ENCODE measurements at regions of chr14 and their contacts with region 1.

Region 1: DNA sequence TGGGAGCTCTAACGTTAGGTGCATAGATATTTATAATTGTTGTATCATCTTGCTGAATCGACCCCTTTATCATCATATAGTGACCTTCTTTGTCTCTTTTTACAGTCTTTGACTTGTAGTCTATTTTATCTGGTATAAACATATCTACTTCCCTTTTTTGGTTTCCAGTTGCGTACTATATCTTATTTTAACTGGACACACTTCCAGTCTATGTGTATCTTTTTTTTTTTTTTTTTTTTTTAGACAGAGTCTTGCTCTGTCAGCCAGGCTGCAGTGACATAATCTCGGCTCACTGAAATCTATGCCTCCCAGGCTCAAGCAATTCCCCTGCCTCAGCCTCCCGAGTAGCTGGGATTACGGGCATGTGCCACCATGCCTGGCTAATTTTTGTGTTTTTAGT is 41.9 kb upstream of the ZFP36L1 start:
- DNase-seq: no peak

Region 2: DNA sequence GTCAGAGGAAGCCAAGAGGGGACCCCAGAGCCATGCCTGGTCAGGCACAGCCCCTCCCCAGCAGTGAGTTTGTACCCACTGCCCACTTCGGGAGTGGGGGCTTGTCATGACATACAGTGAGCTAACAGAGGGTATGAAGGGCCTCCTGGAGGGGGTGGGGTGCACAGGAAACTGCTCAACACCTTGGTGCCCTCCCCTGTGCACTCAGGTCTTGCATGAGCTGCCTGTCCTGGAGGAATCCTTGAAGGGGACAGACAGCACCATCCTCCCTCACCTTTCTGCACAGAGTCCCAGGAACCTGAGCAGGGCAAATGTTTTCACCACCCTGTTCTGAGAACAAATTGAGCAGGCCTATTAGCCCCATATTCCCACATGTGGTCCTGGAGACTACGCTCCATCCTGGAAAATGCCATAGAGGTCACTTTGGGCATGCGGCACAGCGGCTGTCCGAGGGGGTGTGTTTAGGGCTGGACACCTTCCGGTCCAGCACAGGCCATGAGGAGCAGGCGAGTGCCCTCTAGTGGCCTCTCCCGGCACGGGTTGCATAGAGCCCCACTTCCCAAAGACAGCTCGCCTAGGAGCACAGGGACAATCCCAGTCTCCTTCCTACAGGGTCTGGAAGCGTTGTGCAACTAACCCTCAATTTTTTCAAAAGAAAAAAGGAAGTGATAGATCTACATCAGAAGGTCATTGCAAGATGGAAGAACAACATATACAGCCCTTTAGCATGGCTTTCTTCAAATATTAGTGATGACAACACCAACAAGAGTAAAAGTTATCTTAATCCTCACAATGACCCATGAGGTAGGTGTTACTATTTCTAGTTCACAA is 10.1 kb before region 1 on chr14:
- CTCF ChIA-PET with region 1: interaction called, 13 read pairs
- POLR2A ChIA-PET with region 1: no interaction called
- DNase-seq: peak; percentile 91